ENCODE measurements at regions of chr12 and their contacts with region 1.

Region 1: GRCh38 chr12:104671407-104672098 is 214.8 kb downstream of the CHST11 start:
- DNase-seq: peak; percentile 81
- H3K4me3 ChIP-seq: no peak overlapping the region
- H3K27ac ChIP-seq: peak overlapping the region; percentile 26 to 66 (median 58)
- H3K4me1 ChIP-seq: peaks cover 40 to 71% (median 50%) of the 10 kb centered on the region in 4 donors
- H3K27me3 ChIP-seq: no peaks in the 10 kb centered on the region
- CTCF ChIP-seq: no peak
- EP300 ChIP-seq: no peak
- POLR2A ChIP-seq: no peak

Region 2: DNA sequence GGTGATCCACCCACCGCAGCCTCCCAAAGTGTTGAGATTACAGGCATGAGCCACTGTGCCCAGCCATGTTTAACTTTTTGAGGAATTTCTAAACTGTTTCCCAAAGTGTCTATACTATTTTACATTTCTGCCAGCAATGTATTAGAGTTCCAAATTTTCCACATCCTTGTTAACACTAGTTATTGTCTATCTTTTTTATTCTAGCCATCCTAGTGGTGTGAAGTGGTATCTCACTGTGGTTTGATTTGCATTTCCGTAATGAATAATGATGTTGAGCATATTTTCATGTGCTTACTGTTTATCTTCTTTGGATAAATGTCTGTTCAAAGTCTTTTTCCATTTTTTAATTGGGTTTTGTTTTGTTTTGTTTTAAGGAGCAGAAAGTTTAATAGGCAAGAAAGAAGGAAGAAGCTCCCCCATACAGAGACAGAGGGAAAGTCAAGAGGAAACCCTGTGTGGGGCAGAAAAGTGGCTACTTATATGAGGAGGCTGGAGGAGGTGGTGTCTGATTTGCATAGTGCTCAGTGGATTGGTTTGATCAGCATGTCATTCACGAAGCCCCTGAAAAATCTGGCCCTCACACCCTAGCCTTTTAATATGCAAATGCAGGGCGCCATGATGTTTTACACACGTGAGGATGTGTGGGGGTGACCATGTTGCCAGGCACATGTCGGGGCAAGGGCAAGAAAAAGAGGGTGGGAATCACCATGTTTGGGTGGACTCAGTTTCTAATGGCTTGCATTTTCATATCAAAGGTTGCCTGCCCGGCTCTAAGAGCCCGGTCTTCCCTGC is 441.1 kb before region 1 on chr12:
- in situ Hi-C with region 1: no loop called
- intact Hi-C with region 1: no loop called
- DNase-seq: no peak
- H3K4me3 ChIP-seq: no peak overlapping the region
- H3K27ac ChIP-seq: no peak overlapping the region
- H3K4me1 ChIP-seq: no peaks in the 10 kb centered on the region
- H3K27me3 ChIP-seq: no peaks in the 10 kb centered on the region
- CTCF ChIP-seq: peak in 1 of 5 experiments; percentile 8
- EP300 ChIP-seq: no peak
- POLR2A ChIP-seq: no peak

Region 3: GRCh38 chr12:104456417-104456949 is 215.1 kb before region 1 on chr12 and contains the start of gene CHST11:
- in situ Hi-C with region 1: no loop called
- intact Hi-C with region 1: loop called (anchors 5 kb)
- DNase-seq: peak; percentile 76
- H3K4me3 ChIP-seq: peak within 1 kb of the TSS; percentile 55 to 91 (median 64)
- H3K27ac ChIP-seq: peak within 1 kb of the TSS; percentile 85 to 94 (median 92)
- H3K4me1 ChIP-seq: peaks cover 0 to 29% (median 13%) of the 10 kb centered on the region in 4 donors
- H3K27me3 ChIP-seq: peaks cover 31% of the 10 kb centered on the region
- CTCF ChIP-seq: peak; percentile 12 to 32 (median 25)
- EP300 ChIP-seq: no peak
- POLR2A ChIP-seq: peak; percentile 39
- total RNA-seq, gene CHST11: 4.2 to 123 (median 31.5) TPM

Region 4: GRCh38 chr12:104582739-104583138 is 88.8 kb before region 1 on chr12:
- in situ Hi-C with region 1: no loop called
- intact Hi-C with region 1: no loop called
- DNase-seq: peak; percentile 44
- H3K4me3 ChIP-seq: no peak overlapping the region
- H3K27ac ChIP-seq: peak overlapping the region in 1 of 4 donors; percentile 22
- H3K4me1 ChIP-seq: peaks cover 0 to 32% (median 3%) of the 10 kb centered on the region in 4 donors
- H3K27me3 ChIP-seq: no peaks in the 10 kb centered on the region
- CTCF ChIP-seq: no peak
- EP300 ChIP-seq: no peak
- POLR2A ChIP-seq: no peak